ENCODE measurements at regions of chr1 and their contacts with region 1.

Region 1: DNA sequence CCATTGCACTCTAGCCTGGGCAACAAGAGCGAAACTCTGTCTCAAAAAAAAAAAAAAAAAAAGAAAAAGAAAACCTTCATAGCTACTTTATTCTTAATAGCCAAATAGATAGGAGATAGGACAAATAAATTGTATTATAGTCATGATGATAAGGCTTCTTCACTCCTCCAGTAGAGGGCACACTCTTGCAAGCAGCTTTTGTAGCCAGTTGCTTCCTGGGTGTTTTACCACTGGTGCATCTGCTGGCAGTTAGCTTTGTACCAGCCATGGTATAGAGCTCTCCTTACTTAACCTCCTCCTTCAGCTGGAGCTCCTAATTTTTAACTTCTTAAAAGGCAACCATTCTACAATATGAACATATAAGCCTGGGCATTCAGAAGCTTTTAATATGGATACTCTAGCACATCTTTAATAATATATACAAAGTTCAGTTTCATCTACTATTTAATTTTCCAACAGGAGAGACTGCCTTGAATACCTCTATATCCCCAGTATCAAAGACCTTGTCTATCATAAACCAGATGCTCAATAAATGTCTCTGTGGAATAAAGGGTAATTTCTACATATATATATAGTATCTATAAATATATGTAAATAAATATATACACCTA is 35.8 kb downstream of the EVI5 start:
- DNase-seq: peak; percentile 46
- H3K4me3 Mint-ChIP-seq: no peak overlapping the region
- H3K27ac Mint-ChIP-seq: no peak overlapping the region
- H3K4me1 Mint-ChIP-seq: no peaks in the 10 kb centered on the region
- H3K27me3 Mint-ChIP-seq: peaks cover 18% of the 10 kb centered on the region

Region 2: GRCh38 chr1:92736395-92736794 is 12.7 kb before region 1 on chr1:
- CTCF ChIA-PET with region 1: interaction called, 10 read pairs
- POLR2A ChIA-PET with region 1: no interaction called
- DNase-seq: no peak
- H3K4me3 Mint-ChIP-seq: no peak overlapping the region
- H3K27ac Mint-ChIP-seq: no peak overlapping the region
- H3K4me1 Mint-ChIP-seq: no peaks in the 10 kb centered on the region
- H3K27me3 Mint-ChIP-seq: peaks cover 22% of the 10 kb centered on the region

Region 3: GRCh38 chr1:92817986-92818764 is 69.0 kb after region 1 on chr1:
- CTCF ChIA-PET with region 1: interaction called, 105 read pairs
- POLR2A ChIA-PET with region 1: interaction called, 4 read pairs
- DNase-seq: peak; percentile 22
- H3K4me3 Mint-ChIP-seq: no peak overlapping the region
- H3K27ac Mint-ChIP-seq: no peak overlapping the region
- H3K4me1 Mint-ChIP-seq: no peaks in the 10 kb centered on the region
- H3K27me3 Mint-ChIP-seq: peaks cover 33% of the 10 kb centered on the region

Measured in activated CD4-positive, alpha-beta memory T cell treated with anti-CD3 and anti-CD28 coated beads, Interleukin-2, amount 10 ng/mL, durations not matched to agents 7 days and 5 days (primary cell).